A673 (cell line): ENCODE measurements at regions of chr22 and their contacts with region 1.

Region 1: DNA sequence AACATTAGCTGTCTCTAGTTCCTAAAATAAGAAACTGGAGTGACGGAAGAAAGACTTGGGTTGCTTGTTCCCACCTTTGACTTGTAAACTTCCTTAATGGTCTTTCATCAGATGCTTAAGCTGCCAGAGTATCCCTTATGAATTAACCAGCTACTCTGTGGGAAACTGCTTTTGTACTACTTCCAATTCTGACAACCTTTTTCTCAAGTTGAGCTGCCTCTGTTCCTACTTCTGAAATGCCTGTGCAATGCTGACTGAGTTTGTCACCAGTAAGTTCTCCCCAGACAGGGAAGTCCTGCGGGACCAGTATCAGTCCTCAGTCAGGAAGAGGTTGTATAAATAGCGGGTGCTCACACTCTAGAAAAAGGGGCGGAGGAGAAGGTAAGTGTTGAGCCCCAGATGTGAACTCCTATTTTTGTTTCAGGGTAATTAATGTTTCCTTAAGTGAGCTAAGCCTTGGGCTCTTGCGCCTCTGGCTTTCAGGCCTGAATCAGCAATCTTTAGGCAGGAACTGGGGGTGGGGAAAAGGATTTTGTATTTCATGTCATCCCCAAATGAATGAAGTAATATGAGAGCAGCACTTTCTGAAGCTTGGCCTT is 67.2 kb downstream of the CECR2 start:
- DNase-seq: peak; percentile 54
- H3K4me3 ChIP-seq: no peak overlapping the region
- H3K27ac ChIP-seq: peak overlapping the region; percentile 57
- H3K4me1 ChIP-seq: peaks cover 15% of the 10 kb centered on the region
- H3K27me3 ChIP-seq: no peaks in the 10 kb centered on the region
- CTCF ChIP-seq: no peak

Region 2: DNA sequence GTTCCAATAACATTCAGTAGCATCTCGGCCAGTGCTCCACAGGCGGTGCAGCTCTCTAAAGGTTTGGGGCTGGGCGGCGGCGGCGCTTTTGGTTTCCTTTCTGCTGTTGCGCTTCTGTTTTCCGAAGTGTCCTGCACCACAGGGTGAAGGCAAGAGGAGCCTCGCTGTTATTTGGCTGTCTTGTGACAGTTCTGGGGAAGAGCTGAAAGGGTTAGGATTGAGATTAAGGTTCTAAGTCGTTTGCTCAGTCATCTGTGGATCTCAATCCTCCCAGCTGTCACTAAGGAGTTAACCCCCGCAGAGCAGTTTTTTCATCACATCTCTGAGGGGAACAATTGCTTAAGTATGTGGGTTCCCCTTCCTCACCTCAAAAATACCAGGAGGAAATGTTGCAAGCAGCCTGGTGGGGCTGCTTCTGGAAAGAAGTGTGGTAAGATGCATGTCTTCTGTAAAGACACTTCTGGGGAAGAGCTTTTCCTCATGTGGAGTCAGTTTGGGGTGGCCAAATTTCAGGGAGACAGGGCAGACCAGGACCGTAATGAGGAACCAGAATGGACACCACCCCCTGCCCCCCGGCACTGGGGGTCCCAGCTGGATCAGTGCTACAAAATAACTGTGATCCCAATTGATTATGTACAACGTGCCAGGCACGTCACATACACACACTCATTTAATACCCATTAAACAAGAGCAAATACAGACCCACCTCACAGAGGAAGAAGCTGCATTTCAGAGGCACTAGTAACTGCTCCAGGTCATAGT is 329.5 kb before region 1 on chr22:
- CTCF ChIA-PET with region 1: no interaction called
- POLR2A ChIA-PET with region 1: no interaction called
- intact Hi-C with region 1: no loop called
- DNase-seq: no peak
- H3K4me3 ChIP-seq: no peak overlapping the region
- H3K27ac ChIP-seq: no peak overlapping the region
- H3K4me1 ChIP-seq: no peaks in the 10 kb centered on the region
- H3K27me3 ChIP-seq: no peaks in the 10 kb centered on the region
- CTCF ChIP-seq: no peak

Region 3: GRCh38 chr22:17381237-17381914 is 55.1 kb before region 1 on chr22:
- CTCF ChIA-PET with region 1: no interaction called
- POLR2A ChIA-PET with region 1: interaction called, 11 read pairs
- intact Hi-C with region 1: no loop called
- DNase-seq: no peak
- H3K4me3 ChIP-seq: no peak overlapping the region
- H3K27ac ChIP-seq: no peak overlapping the region
- H3K4me1 ChIP-seq: no peaks in the 10 kb centered on the region
- H3K27me3 ChIP-seq: no peaks in the 10 kb centered on the region
- CTCF ChIP-seq: no peak

Region 4: GRCh38 chr22:17700778-17701177 is 264.3 kb after region 1 on chr22:
- CTCF ChIA-PET with region 1: no interaction called
- POLR2A ChIA-PET with region 1: interaction called, 14 read pairs
- intact Hi-C with region 1: no loop called
- DNase-seq: no peak
- H3K4me3 ChIP-seq: no peak overlapping the region
- H3K27ac ChIP-seq: no peak overlapping the region
- H3K4me1 ChIP-seq: peaks cover 28% of the 10 kb centered on the region
- H3K27me3 ChIP-seq: no peaks in the 10 kb centered on the region
- CTCF ChIP-seq: no peak